Right lobe of liver (tissue), 6 donors: ENCODE measurements at regions of chr1 and their contacts with region 1.

Region 1: DNA sequence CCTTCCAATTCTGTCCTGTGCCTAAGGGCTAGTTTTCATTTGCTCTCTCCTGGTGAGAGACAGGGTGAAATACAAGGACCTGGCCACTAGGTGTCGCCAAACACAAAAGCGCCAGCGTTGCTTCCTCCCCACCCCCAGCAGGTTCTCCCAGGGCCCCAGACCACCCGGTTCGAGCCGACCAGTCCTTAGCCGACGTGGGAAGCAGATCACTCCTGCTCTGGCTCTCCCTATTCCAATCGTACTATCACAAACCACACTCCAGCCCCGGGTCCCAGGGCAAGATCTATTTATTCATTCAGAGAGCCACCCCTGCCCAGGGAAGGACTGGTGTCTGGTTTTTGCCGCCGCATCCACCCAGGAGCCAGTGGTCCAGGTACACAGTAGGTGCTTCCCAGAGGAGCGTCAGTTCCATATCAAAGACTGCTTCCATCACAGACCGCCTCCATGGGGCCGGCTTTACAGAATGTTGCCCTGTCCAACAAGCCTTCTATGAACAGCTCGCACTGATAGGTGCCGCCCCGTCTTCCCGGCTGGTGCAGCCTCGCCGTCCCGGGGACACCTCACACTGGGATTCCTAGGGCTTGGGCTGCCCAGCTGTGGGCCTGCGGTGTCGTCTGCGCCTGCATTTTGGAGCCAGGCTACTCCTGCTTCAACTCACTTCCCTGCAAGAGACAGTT is 35.0 kb downstream of the CTNNBIP1 start:
- DNase-seq: peak; percentile 61 to 77 (median 76)
- ATAC-seq: peak; percentile 87 to 96 (median 93)
- H3K4me3 ChIP-seq: peak overlapping the region in 2 of 3 donors; percentile 5 to 14
- H3K27ac ChIP-seq: no peak overlapping the region
- H3K4me1 ChIP-seq: peaks cover 0 to 8% (median 0%) of the 10 kb centered on the region in 4 donors
- H3K27me3 ChIP-seq: no peaks in the 10 kb centered on the region
- CTCF ChIP-seq: peak; percentile 86 to 94 (median 88)
- POLR2A ChIP-seq: no peak

Region 2: DNA sequence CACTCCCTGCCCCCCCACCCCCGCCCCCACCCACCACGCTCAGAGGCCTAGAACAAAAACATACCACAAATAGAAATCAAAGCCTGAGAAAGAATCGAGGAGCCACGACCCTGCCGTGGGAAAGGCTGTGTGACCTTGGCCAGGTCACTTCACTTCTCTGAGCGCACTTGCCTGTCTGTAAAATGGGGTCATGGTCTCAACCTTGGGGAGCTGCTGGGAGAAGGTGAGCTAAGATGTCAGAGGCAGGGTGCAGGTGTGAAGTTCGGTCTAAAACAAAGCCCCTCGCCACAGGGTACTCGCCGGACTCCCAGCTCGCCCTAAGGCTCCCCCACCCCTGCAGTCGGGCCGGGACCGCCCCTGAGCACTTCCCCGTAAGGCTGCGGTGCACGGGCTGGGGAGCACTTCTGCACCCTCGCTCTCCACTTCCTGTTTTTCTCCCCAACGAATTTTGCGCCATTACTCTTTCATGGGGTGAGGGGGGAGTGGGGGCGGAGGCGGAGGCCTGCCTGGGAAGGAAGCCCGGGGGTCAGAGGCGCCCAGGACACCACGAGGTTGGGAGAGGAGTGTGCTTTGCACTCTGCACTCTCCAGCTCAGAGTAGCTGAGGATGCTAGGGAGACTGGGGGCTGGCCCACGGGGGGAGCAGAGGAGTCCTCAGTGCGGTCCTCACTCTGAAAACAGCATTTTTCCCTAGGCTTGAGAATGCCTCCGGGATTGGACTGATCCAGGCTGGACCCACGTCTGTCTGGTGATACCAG is 245.5 kb before region 1 on chr1:
- intact Hi-C with region 1: loop called in 1 of 2 experiments (anchors 5 kb)
- DNase-seq: peak; percentile 62 to 81 (median 71)
- ATAC-seq: peak; percentile 48 to 58 (median 52)
- H3K4me3 ChIP-seq: no peak overlapping the region
- H3K27ac ChIP-seq: no peak overlapping the region
- H3K4me1 ChIP-seq: peaks cover 0 to 3% (median 0%) of the 10 kb centered on the region in 4 donors
- H3K27me3 ChIP-seq: no peaks in the 10 kb centered on the region
- CTCF ChIP-seq: no peak
- POLR2A ChIP-seq: no peak

Region 3: GRCh38 chr1:9809100-9809510 is 66.0 kb before region 1 on chr1:
- intact Hi-C with region 1: no loop called
- DNase-seq: no peak
- ATAC-seq: no peak
- H3K4me3 ChIP-seq: no peak overlapping the region
- H3K27ac ChIP-seq: no peak overlapping the region
- H3K4me1 ChIP-seq: no peaks in the 10 kb centered on the region
- H3K27me3 ChIP-seq: no peaks in the 10 kb centered on the region
- CTCF ChIP-seq: no peak
- POLR2A ChIP-seq: no peak

Region 4: GRCh38 chr1:9929431-9930385 is 54.6 kb after region 1 on chr1:
- intact Hi-C with region 1: loop called in 1 of 2 experiments (anchors 10 kb)
- DNase-seq: no peak
- ATAC-seq: peak in 2 of 4 donors; percentile 42 to 46
- H3K4me3 ChIP-seq: no peak overlapping the region
- H3K27ac ChIP-seq: no peak overlapping the region
- H3K4me1 ChIP-seq: no peaks in the 10 kb centered on the region
- H3K27me3 ChIP-seq: no peaks in the 10 kb centered on the region
- CTCF ChIP-seq: no peak
- POLR2A ChIP-seq: no peak

Region 5: GRCh38 chr1:9942939-9943788 is 68.1 kb after region 1 on chr1 and contains the starts of genes LZIC and NMNAT1:
- intact Hi-C with region 1: loop called (anchors 10 kb)
- DNase-seq: peak; percentile 95 to 96 (median 96)
- ATAC-seq: peak; percentile 99 to 100 (median 100)
- H3K4me3 ChIP-seq: peak within 1 kb of the TSS; percentile 81 to 88 (median 83)
- H3K27ac ChIP-seq: peak within 1 kb of the TSS; percentile 78 to 89 (median 79)
- H3K4me1 ChIP-seq: peaks cover 0 to 15% (median 4%) of the 10 kb centered on the region in 4 donors
- H3K27me3 ChIP-seq: no peaks in the 10 kb centered on the region
- CTCF ChIP-seq: peak in 1 of 4 donors; percentile 2
- POLR2A ChIP-seq: peak; percentile 95
- total RNA-seq, gene LZIC: 10.6 to 18.5 (median 15.9) TPM
- total RNA-seq, gene NMNAT1: 5.3 to 8.8 (median 7.6) TPM

Region 6: DNA sequence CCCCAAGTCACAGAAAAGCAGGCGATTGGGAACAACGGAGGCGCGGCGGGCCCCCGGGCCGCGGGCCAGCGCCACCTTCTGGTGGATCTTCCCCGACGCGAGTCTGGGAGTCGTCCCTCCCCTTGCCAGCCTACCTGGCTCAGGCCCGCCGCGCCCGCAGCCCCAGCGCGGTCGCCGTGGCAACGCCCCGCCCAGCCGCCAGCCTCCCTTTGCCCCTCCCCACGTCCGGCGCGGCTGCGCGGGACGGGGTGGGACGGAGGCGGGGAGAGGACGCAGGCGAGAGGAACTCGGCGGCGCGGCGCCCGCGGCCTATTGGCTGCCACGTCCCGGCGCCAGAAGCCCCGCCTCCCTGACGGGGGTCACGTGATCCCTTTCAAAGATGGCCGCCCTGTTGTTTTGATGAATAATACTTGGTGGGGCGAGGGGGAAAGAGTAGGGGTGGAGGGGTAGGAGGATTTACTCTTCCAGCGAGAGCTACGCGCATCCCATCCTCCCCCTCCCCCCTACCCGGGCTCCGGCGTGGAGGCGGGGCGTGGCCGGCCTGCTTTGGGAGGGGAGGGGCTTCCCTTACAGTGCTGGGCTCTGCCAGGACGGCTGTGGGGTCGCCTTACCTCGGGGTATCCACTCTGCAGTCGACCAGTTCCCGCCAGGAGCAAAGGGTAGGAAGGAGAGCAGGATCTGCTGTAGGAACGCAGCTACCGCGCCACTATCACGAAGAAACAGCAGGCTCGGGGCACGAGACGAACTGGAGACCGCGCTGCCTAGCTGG is 157.7 kb after region 1 on chr1 and contains the start of gene UBE4B:
- intact Hi-C with region 1: loop called in 1 of 2 experiments (anchors 10 kb)
- DNase-seq: peak; percentile 98 to 99 (median 99)
- ATAC-seq: peak; percentile 96 to 100 (median 98)
- H3K4me3 ChIP-seq: peak within 1 kb of the TSS; percentile 97 to 100 (median 99)
- H3K27ac ChIP-seq: peak within 1 kb of the TSS; percentile 87 to 91 (median 88)
- H3K4me1 ChIP-seq: peaks cover 0 to 16% (median 2%) of the 10 kb centered on the region in 4 donors
- H3K27me3 ChIP-seq: no peaks in the 10 kb centered on the region
- CTCF ChIP-seq: peak; percentile 88 to 97 (median 94)
- POLR2A ChIP-seq: peak; percentile 24
- total RNA-seq, gene UBE4B: 11.4 to 27.9 (median 22.6) TPM

Region 7: GRCh38 chr1:10065344-10065685 is 190.2 kb after region 1 on chr1:
- intact Hi-C with region 1: no loop called
- DNase-seq: peak; percentile 68 to 83 (median 75)
- ATAC-seq: peak; percentile 95 to 98 (median 97)
- H3K4me3 ChIP-seq: no peak overlapping the region
- H3K27ac ChIP-seq: peak overlapping the region; percentile 56 to 87 (median 63)
- H3K4me1 ChIP-seq: peaks cover 0 to 12% (median 4%) of the 10 kb centered on the region in 4 donors
- H3K27me3 ChIP-seq: no peaks in the 10 kb centered on the region
- CTCF ChIP-seq: no peak
- POLR2A ChIP-seq: no peak